CD4-positive, alpha-beta memory T cell (primary cell): ENCODE measurements at regions of chr19 and their contacts with region 1.

Region 1: DNA sequence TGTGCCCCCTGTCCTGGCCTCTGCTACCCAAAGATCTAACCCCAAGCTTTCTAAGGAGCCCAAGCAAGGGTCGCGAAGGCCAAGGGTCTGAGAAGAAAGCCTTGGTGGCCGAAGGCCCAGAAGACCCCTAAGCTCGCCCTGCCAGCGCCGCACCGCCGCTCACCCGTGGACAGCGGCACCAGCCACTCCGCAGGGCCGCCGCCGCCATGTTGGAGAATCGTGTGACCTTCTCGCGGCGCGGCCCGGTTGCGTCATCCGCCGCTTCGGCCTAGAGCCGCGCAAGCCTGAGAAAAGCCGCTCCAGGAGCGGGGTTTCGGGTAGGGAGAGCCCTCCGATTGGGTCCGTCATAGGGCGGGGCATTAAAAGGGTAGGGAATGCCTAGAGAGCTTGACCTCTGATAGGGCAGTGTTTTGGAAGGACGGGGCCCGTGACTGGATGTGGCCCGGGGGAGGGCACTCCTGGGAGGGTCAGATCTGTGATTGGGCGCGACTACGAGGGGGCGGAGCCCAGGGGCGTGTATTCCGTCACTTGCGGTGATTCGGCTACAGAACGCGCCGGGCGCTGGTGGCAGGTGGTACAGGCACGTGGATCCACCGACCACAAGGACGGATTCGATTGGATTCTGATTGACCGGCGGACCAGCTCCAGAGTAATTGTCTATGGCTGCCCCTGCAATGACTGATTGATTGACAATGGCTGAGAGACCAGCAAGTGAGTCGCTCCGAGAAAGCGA is at the start of gene TIMM44:
- DNase-seq: peak; percentile 98 to 100 (median 99)
- H3K4me3 ChIP-seq: peak within 1 kb of the TSS; percentile 58 to 71
- H3K4me3 Mint-ChIP-seq: peak within 1 kb of the TSS; percentile 86 to 94 (median 92)
- H3K27ac ChIP-seq: peak within 1 kb of the TSS; percentile 92
- H3K27ac Mint-ChIP-seq: peak within 1 kb of the TSS; percentile 88 to 98 (median 97)
- H3K4me1 ChIP-seq: peaks cover 16% of the 10 kb centered on the region
- H3K4me1 Mint-ChIP-seq: peaks cover 11 to 45% (median 28%) of the 10 kb centered on the region in 4 donors
- H3K27me3 ChIP-seq: no peaks in the 10 kb centered on the region
- H3K27me3 Mint-ChIP-seq: no peaks in the 10 kb centered on the region
- total RNA-seq, gene TIMM44: 71.6 to 71.9 TPM

Region 2: GRCh38 chr19:7868676-7869452 is 74.7 kb before region 1 on chr19:
- CTCF ChIA-PET with region 1: interaction called, 11 read pairs
- POLR2A ChIA-PET with region 1: interaction called, 10 read pairs
- intact Hi-C with region 1: no loop called
- DNase-seq: peak; percentile 85 to 95 (median 92)
- H3K4me3 ChIP-seq: peak overlapping the region; percentile 28 to 75
- H3K4me3 Mint-ChIP-seq: peak overlapping the region; percentile 73 to 88 (median 80)
- H3K27ac ChIP-seq: peak overlapping the region; percentile 61
- H3K27ac Mint-ChIP-seq: peak overlapping the region; percentile 83 to 96 (median 91)
- H3K4me1 ChIP-seq: peaks cover 43% of the 10 kb centered on the region
- H3K4me1 Mint-ChIP-seq: peaks cover 21 to 48% (median 36%) of the 10 kb centered on the region in 4 donors
- H3K27me3 ChIP-seq: no peaks in the 10 kb centered on the region
- H3K27me3 Mint-ChIP-seq: peaks cover 5 to 17% of the 10 kb centered on the region in 2 donors

Region 3: GRCh38 chr19:7919610-7920518 is 23.7 kb before region 1 on chr19 and contains the start of gene SNAPC2:
- CTCF ChIA-PET with region 1: interaction called, 66 read pairs
- POLR2A ChIA-PET with region 1: interaction called, 53 read pairs
- intact Hi-C with region 1: loop called (anchors 1 kb)
- DNase-seq: peak; percentile 96 to 99 (median 97)
- H3K4me3 ChIP-seq: peak within 1 kb of the TSS; percentile 71 to 76
- H3K4me3 Mint-ChIP-seq: peak within 1 kb of the TSS; percentile 88 to 97 (median 92)
- H3K27ac ChIP-seq: peak within 1 kb of the TSS; percentile 76
- H3K27ac Mint-ChIP-seq: peak within 1 kb of the TSS; percentile 85 to 96 (median 94)
- H3K4me1 ChIP-seq: peaks cover 53% of the 10 kb centered on the region
- H3K4me1 Mint-ChIP-seq: peaks cover 14 to 59% (median 38%) of the 10 kb centered on the region in 4 donors
- H3K27me3 ChIP-seq: peaks cover 13% of the 10 kb centered on the region
- H3K27me3 Mint-ChIP-seq: peaks cover 15 to 26% of the 10 kb centered on the region in 2 donors
- total RNA-seq, gene SNAPC2: 16.3 to 18.9 TPM

Region 4: GRCh38 chr19:8005534-8006256 is 62.1 kb after region 1 on chr19 and contains the start of gene ELAVL1:
- CTCF ChIA-PET with region 1: interaction called, 45 read pairs
- POLR2A ChIA-PET with region 1: interaction called, 19 read pairs
- intact Hi-C with region 1: loop called (anchors 1 kb)
- DNase-seq: peak; percentile 86 to 91 (median 88)
- H3K4me3 ChIP-seq: peak within 1 kb of the TSS; percentile 39 to 77
- H3K4me3 Mint-ChIP-seq: peak within 1 kb of the TSS; percentile 89 to 97 (median 91)
- H3K27ac ChIP-seq: peak within 1 kb of the TSS; percentile 70
- H3K27ac Mint-ChIP-seq: peak within 1 kb of the TSS; percentile 85 to 97 (median 93)
- H3K4me1 ChIP-seq: peaks cover 42% of the 10 kb centered on the region
- H3K4me1 Mint-ChIP-seq: peaks cover 33 to 39% (median 37%) of the 10 kb centered on the region in 4 donors
- H3K27me3 ChIP-seq: no peaks in the 10 kb centered on the region
- H3K27me3 Mint-ChIP-seq: no peaks in the 10 kb centered on the region
- total RNA-seq, gene ELAVL1: 54.2 to 54.7 TPM

Region 5: GRCh38 chr19:8208922-8209461 is 265.4 kb after region 1 on chr19 and contains the start of gene CERS4:
- CTCF ChIA-PET with region 1: no interaction called
- POLR2A ChIA-PET with region 1: interaction called, 6 read pairs
- intact Hi-C with region 1: loop called (anchors 1 kb)
- DNase-seq: peak in 3 of 5 donors; percentile 76 to 78 (median 78)
- H3K4me3 ChIP-seq: peak within 1 kb of the TSS; percentile 63 to 79
- H3K4me3 Mint-ChIP-seq: peak within 1 kb of the TSS; percentile 82 to 92 (median 92)
- H3K27ac ChIP-seq: peak within 1 kb of the TSS; percentile 84
- H3K27ac Mint-ChIP-seq: peak within 1 kb of the TSS; percentile 85 to 96 (median 93)
- H3K4me1 ChIP-seq: peaks cover 19% of the 10 kb centered on the region
- H3K4me1 Mint-ChIP-seq: peaks cover 12 to 29% (median 22%) of the 10 kb centered on the region in 4 donors
- H3K27me3 ChIP-seq: no peaks in the 10 kb centered on the region
- H3K27me3 Mint-ChIP-seq: no peaks in the 10 kb centered on the region
- total RNA-seq, gene CERS4: 29.2 to 30.6 TPM